Gastrocnemius medialis (tissue), 4 donors: ENCODE measurements at regions of chr11 and their contacts with region 1.

Region 1: DNA sequence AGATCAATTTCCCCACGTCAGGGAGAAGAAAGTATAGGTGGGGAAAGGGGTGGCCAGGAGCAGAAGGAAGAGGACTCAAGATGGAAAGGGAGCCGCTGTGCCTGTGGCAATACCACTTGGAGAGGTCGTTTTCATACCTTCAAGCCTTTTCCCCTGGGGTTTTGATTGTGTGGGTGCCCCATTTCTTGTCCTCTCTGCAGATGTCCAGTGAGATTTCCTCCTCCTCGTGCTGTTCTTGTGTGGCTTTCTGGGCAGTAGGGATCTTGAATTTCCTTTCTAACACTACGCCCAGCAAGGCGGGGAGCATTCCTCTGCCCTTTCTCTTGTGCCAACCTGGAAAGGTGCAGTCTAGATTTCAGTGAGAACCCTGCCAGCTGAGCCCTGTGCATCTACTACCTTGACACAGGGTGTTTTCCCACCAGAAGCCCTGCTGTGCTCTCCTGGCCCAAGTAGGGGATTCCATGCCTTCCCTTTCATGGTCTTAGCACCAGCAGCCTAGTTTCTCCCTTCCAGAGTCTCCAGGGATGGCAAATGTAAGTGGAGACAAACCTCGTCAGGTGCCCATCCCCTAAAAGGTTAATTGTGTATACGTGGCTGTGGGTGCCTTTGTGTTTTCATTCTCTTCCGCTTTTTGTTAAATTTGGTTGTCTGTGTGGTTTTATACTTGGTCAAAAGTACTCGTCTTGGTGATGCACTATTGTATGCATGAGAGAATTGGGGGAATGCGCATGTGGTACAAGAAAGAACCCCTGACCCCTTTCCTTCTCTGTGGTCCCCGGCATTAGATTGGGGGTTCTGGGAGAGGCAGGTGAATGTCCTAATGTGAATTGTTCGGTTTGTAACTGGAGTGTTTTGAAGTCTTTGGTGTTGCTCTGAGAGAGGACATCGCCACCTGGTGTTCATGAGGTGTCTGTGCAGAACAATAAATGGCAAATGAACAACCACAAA is 71.4 kb upstream of the MPEG1 start:
- DNase-seq: no peak
- ATAC-seq: no peak
- H3K4me3 ChIP-seq: no peak overlapping the region
- H3K27ac ChIP-seq: no peak overlapping the region
- H3K4me1 ChIP-seq: no peaks in the 10 kb centered on the region
- H3K27me3 ChIP-seq: no peaks in the 10 kb centered on the region
- CTCF ChIP-seq: peak; percentile 36 to 72 (median 61)
- POLR2A ChIP-seq: no peak

Region 2: DNA sequence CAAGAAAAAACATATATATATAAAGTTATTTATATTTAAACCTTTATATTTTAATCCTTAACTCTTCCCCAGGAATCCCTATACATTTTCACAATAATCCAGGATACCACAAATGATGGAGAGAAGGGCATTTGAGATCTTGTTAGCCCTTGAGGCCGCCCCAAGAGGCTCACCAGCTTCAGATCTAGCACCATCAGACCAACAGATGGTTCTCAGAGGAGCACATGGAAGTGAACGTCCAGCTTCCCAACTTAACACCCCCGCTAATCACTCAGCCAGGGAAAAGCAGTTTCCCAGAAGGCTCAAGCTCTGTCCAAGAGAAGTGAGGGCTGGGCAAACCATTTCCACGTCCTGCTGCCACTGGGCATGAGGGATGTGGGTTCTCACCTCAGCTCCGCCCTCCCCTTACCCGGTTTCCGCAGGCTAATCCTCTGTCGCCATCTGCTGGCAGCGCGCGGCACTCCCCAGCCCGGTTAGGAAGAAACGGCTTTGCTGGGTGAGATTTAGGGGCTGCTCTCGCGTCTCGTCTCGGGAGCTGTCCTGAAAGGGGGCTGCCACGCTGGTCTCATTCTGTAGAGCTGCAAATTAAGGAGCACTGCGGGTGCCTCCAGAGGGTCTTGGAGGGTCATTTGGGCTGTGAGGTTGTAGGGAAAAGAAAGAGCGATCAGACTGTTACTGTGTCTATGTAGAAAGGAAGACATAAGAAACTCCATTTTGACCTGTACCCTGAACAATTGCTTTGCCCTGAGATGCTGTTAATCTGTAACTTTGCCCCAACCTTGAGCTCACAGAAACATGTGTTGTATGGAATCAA is 148.2 kb before region 1 on chr11:
- in situ Hi-C with region 1: no loop called
- intact Hi-C with region 1: no loop called
- DNase-seq: peak; percentile 26 to 49
- ATAC-seq: peak; percentile 68 to 87
- H3K4me3 ChIP-seq: peak overlapping the region in 2 of 4 donors; percentile 29 to 30
- H3K27ac ChIP-seq: no peak overlapping the region
- H3K4me1 ChIP-seq: no peaks in the 10 kb centered on the region
- H3K27me3 ChIP-seq: no peaks in the 10 kb centered on the region
- CTCF ChIP-seq: peak; percentile 72 to 95 (median 86)
- POLR2A ChIP-seq: no peak

Region 3: GRCh38 chr11:59164028-59164427 is 120.1 kb before region 1 on chr11:
- in situ Hi-C with region 1: loop called in 1 of 4 experiments (anchors 10 kb)
- intact Hi-C with region 1: no loop called
- DNase-seq: no peak
- ATAC-seq: no peak
- H3K4me3 ChIP-seq: no peak overlapping the region
- H3K27ac ChIP-seq: no peak overlapping the region
- H3K4me1 ChIP-seq: no peaks in the 10 kb centered on the region
- H3K27me3 ChIP-seq: peaks cover 0 to 2% (median 0%) of the 10 kb centered on the region in 3 donors
- CTCF ChIP-seq: no peak
- POLR2A ChIP-seq: no peak

Region 4: DNA sequence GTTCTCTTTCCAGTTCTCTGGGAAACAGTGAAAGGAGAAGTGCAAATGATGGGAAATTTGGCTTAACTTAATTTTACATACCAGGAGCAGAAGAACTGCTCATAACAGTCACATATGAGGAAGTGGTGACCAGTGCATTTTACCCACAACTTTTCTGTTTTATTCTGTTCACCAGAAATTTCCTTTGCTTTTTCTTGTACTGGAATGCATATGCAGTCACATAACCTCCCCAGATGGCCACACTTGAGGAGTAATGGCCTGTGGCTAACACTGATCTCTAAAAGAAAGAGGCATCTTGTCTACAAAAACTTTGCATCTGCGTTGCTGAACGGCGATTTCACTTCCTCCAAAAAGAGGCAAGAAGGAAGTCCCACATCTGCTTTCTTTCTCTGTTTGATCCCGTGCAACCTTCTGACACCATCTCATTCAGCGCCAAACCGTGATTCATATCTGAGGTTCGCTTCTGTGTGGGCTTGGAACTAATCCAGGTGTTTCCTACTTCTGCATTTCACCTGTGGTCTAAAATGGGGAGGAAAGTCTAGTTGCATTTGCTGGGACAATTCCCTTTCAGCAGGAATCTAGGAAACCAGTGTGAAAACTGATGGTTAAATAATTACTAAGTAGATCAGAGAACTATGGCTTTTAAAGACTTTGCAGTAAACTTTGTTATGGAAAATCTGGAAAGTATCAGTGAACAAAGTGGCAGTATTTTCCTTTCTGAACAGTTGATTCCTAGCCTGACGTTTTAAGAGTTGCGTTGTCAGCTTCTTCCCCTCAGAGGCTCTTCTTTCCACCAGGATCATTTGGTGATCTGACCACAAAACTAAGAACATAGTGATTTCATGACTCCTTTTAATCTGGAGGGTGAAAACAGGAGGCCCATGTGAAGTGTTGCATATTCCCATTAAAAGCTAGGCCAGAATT is 67.2 kb before region 1 on chr11:
- in situ Hi-C with region 1: no loop called
- intact Hi-C with region 1: no loop called
- DNase-seq: peak; percentile 23 to 47
- ATAC-seq: peak; percentile 55 to 61
- H3K4me3 ChIP-seq: no peak overlapping the region
- H3K27ac ChIP-seq: peak overlapping the region in 3 of 4 donors; percentile 2 to 34 (median 20)
- H3K4me1 ChIP-seq: peaks cover 0 to 10% of the 10 kb centered on the region in 2 donors
- H3K27me3 ChIP-seq: no peaks in the 10 kb centered on the region
- CTCF ChIP-seq: no peak
- POLR2A ChIP-seq: no peak

Region 5: GRCh38 chr11:59247531-59248227 is 36.4 kb before region 1 on chr11:
- in situ Hi-C with region 1: no loop called
- intact Hi-C with region 1: no loop called
- DNase-seq: peak; percentile 25 to 53
- ATAC-seq: peak in 1 of 2 donors; percentile 18
- H3K4me3 ChIP-seq: no peak overlapping the region
- H3K27ac ChIP-seq: no peak overlapping the region
- H3K4me1 ChIP-seq: peaks cover 0 to 6% of the 10 kb centered on the region in 2 donors
- H3K27me3 ChIP-seq: no peaks in the 10 kb centered on the region
- CTCF ChIP-seq: no peak
- POLR2A ChIP-seq: no peak

Region 6: GRCh38 chr11:59335001-59335400 is 50.9 kb after region 1 on chr11:
- in situ Hi-C with region 1: no loop called
- intact Hi-C with region 1: no loop called
- DNase-seq: no peak
- ATAC-seq: no peak
- H3K4me3 ChIP-seq: no peak overlapping the region
- H3K27ac ChIP-seq: no peak overlapping the region
- H3K4me1 ChIP-seq: no peaks in the 10 kb centered on the region
- H3K27me3 ChIP-seq: no peaks in the 10 kb centered on the region
- CTCF ChIP-seq: no peak
- POLR2A ChIP-seq: no peak

Region 7: DNA sequence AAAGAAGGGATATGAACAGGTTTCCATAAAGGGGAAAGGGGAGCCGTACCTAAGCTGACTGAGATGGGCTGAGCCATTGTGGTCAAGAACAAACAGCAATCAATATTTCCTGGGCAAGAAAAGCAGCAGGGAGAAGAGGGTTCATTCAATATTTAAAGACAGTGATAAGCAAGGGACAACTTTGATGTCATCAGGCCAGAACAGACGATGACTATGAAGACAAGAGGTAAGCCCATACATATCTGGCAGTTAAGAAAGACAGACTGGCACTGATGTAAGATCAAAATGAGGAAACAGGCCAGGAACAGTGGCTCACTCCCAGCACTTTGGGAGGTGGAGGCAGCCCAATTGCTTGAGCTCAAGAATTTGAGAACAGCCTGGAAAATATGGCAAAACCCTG is 139.7 kb after region 1 on chr11:
- in situ Hi-C with region 1: no loop called
- intact Hi-C with region 1: loop called (anchors 5 kb)
- DNase-seq: no peak
- ATAC-seq: no peak
- H3K4me3 ChIP-seq: no peak overlapping the region
- H3K27ac ChIP-seq: no peak overlapping the region
- H3K4me1 ChIP-seq: no peaks in the 10 kb centered on the region
- H3K27me3 ChIP-seq: no peaks in the 10 kb centered on the region
- CTCF ChIP-seq: no peak
- POLR2A ChIP-seq: no peak